ENCODE measurements at regions of chr3 and their contacts with region 1.

Region 1: GRCh38 chr3:172595641-172596393 is 72.6 kb upstream of the TNFSF10 start:
- DNase-seq: peak in 7 of 9 experiments; percentile 18 to 82 (median 34)
- ATAC-seq: peak; percentile 67
- H3K4me3 ChIP-seq: peak overlapping the region; percentile 12 to 35
- H3K4me3 Mint-ChIP-seq: peak overlapping the region; percentile 80
- H3K27ac ChIP-seq: peak overlapping the region in 1 of 2 experiments; percentile 63
- H3K27ac Mint-ChIP-seq: peak overlapping the region; percentile 42
- H3K4me1 ChIP-seq: peaks cover 32% of the 10 kb centered on the region
- H3K4me1 Mint-ChIP-seq: peaks cover 46% of the 10 kb centered on the region
- H3K27me3 ChIP-seq: no peaks in the 10 kb centered on the region
- H3K27me3 Mint-ChIP-seq: no peaks in the 10 kb centered on the region
- CTCF ChIP-seq: peak; percentile 95

Region 2: GRCh38 chr3:172236771-172237742 is 358.8 kb before region 1 on chr3:
- CTCF ChIA-PET with region 1: no interaction called
- POLR2A ChIA-PET with region 1: no interaction called
- intact Hi-C with region 1: no loop called
- DNase-seq: no peak
- ATAC-seq: no peak
- H3K4me3 ChIP-seq: no peak overlapping the region
- H3K4me3 Mint-ChIP-seq: no peak overlapping the region
- H3K27ac ChIP-seq: no peak overlapping the region
- H3K27ac Mint-ChIP-seq: no peak overlapping the region
- H3K4me1 ChIP-seq: no peaks in the 10 kb centered on the region
- H3K4me1 Mint-ChIP-seq: no peaks in the 10 kb centered on the region
- H3K27me3 ChIP-seq: no peaks in the 10 kb centered on the region
- H3K27me3 Mint-ChIP-seq: no peaks in the 10 kb centered on the region
- CTCF ChIP-seq: no peak

Region 3: DNA sequence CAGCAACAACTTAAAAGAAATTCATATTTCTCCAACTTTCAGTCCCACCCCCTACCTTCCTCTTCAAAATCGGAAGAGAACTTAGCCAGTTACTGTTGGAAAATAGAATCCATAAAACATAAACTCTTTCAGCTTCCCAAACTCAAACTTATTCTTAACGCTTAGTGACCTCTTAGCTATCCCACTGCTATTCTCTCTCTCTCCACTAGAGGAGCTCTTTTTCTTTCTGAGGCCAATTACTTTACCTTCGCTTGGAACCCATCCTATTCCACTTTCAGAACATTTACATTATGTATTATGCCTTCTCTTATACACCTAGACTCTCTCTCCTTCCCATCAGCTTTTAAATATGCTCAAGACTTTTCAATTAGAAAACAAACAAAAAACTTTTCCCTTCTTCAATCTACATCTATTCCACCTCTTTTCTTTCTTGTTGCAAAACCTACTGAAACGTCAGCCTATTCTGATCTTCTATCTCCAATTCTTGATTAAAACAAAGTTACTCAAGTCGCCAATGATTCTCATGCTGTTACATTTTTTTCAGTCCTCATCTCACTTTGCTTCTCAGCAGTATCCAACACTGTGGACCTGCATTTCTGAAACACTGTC is 134.2 kb before region 1 on chr3:
- CTCF ChIA-PET with region 1: interaction called, 10 read pairs
- POLR2A ChIA-PET with region 1: no interaction called
- intact Hi-C with region 1: no loop called
- DNase-seq: peak in 2 of 9 experiments; percentile 43 to 55
- ATAC-seq: peak; percentile 62
- H3K4me3 ChIP-seq: no peak overlapping the region
- H3K4me3 Mint-ChIP-seq: no peak overlapping the region
- H3K27ac ChIP-seq: no peak overlapping the region
- H3K27ac Mint-ChIP-seq: no peak overlapping the region
- H3K4me1 ChIP-seq: no peaks in the 10 kb centered on the region
- H3K4me1 Mint-ChIP-seq: no peaks in the 10 kb centered on the region
- H3K27me3 ChIP-seq: peaks cover 0 to 2% of the 10 kb centered on the region in 2 experiments
- H3K27me3 Mint-ChIP-seq: peaks cover 4% of the 10 kb centered on the region
- CTCF ChIP-seq: peak; percentile 93

Region 4: DNA sequence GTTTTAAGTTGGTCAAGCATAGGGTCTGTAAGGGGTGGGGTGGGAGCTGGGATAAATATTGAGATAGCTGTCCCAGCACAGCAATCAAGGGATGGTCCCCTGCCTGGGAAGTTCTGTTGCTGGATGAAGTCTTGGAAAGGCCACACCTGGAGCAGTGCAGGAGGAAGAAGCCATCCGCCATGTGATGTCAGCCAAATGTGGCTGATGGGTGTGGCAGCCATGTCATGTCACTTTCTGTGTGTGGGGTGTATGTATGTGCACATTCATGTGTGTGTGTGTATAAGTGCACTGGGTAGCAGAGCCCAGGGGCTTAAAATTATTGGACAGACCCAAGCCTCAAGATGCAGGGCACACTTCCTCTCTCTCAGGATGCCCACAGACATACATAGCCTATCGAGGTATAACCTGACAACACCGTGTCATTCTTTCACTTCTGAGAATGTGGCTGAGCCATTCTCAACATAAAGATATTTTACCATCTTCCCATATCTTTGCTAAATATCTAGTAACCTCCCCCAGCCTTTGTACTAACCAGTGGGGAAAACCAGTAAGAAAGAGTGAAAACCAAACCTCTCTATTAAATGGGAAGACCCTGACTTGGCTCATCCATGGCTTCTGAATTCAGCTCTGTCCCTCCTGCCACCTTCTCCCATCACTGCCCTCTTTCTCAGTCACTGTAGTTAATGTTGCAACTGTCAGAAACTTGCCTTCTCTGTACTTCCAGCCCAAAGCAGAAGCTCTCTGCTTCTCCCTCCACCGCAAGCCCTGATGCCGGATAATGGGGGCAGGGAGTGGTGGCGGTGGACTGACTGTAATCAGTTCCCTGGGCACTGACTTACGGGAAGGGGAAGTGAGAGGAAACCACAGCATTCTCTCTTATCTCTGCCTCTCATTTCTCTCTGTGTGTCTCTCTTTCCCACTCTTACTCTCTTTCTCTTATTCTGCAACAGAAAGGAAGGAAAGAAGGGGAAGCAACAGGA is 83.7 kb before region 1 on chr3:
- CTCF ChIA-PET with region 1: interaction called, 24 read pairs
- POLR2A ChIA-PET with region 1: no interaction called
- intact Hi-C with region 1: no loop called
- DNase-seq: peak; percentile 18 to 64 (median 39)
- ATAC-seq: peak; percentile 41
- H3K4me3 ChIP-seq: peak overlapping the region in 1 of 2 experiments; percentile 24
- H3K4me3 Mint-ChIP-seq: peak overlapping the region; percentile 55
- H3K27ac ChIP-seq: peak overlapping the region in 1 of 2 experiments; percentile 34
- H3K27ac Mint-ChIP-seq: peak overlapping the region; percentile 73
- H3K4me1 ChIP-seq: peaks cover 37% of the 10 kb centered on the region
- H3K4me1 Mint-ChIP-seq: peaks cover 56% of the 10 kb centered on the region
- H3K27me3 ChIP-seq: no peaks in the 10 kb centered on the region
- H3K27me3 Mint-ChIP-seq: no peaks in the 10 kb centered on the region
- CTCF ChIP-seq: no peak

Region 5: GRCh38 chr3:172530566-172530965 is 65.3 kb before region 1 on chr3:
- CTCF ChIA-PET with region 1: interaction called, 12 read pairs
- POLR2A ChIA-PET with region 1: no interaction called
- intact Hi-C with region 1: no loop called
- DNase-seq: peak in 1 of 9 experiments; percentile 36
- ATAC-seq: peak; percentile 29
- H3K4me3 ChIP-seq: no peak overlapping the region
- H3K4me3 Mint-ChIP-seq: no peak overlapping the region
- H3K27ac ChIP-seq: no peak overlapping the region
- H3K27ac Mint-ChIP-seq: peak overlapping the region; percentile 74
- H3K4me1 ChIP-seq: peaks cover 10% of the 10 kb centered on the region
- H3K4me1 Mint-ChIP-seq: peaks cover 11% of the 10 kb centered on the region
- H3K27me3 ChIP-seq: no peaks in the 10 kb centered on the region
- H3K27me3 Mint-ChIP-seq: no peaks in the 10 kb centered on the region
- CTCF ChIP-seq: no peak

Region 6: GRCh38 chr3:172607305-172608121 is 11.7 kb after region 1 on chr3:
- CTCF ChIA-PET with region 1: interaction called, 38 read pairs
- POLR2A ChIA-PET with region 1: no interaction called
- intact Hi-C with region 1: no loop called
- DNase-seq: no peak
- ATAC-seq: no peak
- H3K4me3 ChIP-seq: no peak overlapping the region
- H3K4me3 Mint-ChIP-seq: no peak overlapping the region
- H3K27ac ChIP-seq: no peak overlapping the region
- H3K27ac Mint-ChIP-seq: no peak overlapping the region
- H3K4me1 ChIP-seq: no peaks in the 10 kb centered on the region
- H3K4me1 Mint-ChIP-seq: no peaks in the 10 kb centered on the region
- H3K27me3 ChIP-seq: no peaks in the 10 kb centered on the region
- H3K27me3 Mint-ChIP-seq: peaks cover 2% of the 10 kb centered on the region
- CTCF ChIP-seq: no peak

Region 7: DNA sequence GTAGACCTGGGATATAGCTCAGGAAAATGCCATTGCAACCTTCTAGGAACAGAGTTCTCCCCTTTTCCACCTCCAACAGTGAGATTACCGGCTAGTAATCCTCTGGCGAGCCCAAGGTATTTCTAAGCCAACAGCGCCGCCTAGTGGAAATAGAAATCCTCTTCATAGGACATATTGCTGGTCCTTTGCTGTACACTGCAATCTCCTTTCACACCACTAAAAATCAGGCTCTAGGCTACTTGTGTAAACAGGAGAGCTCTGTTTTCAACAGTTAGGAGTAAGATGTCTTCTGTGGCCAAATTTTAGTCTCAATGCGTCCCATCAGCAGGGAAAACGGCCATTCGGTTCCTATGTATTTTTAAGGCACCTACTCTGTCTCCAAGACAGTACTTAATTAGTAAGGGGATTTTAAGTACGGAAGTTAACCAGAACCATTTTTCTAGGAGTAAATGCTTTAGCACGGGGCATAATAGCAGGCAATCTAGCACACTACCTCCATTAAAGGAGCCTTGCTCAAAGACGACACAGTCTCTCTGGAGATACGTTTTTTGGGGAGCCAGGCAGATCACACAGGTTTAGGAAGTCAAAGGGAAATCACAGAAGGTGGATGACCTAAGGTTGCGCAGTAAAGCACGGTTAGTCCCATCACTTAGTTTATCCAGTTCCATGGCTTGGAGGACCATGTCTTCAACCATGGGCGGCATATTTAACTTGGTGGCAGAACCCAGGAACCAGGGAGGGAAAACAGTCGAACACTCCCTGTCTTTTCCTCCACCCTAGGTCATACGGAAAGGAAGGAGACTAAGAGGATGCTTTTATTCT is 71.3 kb after region 1 on chr3:
- CTCF ChIA-PET with region 1: interaction called, 11 read pairs
- POLR2A ChIA-PET with region 1: no interaction called
- intact Hi-C with region 1: loop called in 1 of 2 experiments (anchors 2 kb)
- DNase-seq: peak; percentile 51 to 80 (median 73)
- ATAC-seq: peak; percentile 91
- H3K4me3 ChIP-seq: no peak overlapping the region
- H3K4me3 Mint-ChIP-seq: no peak overlapping the region
- H3K27ac ChIP-seq: no peak overlapping the region
- H3K27ac Mint-ChIP-seq: no peak overlapping the region
- H3K4me1 ChIP-seq: peaks cover 13% of the 10 kb centered on the region
- H3K4me1 Mint-ChIP-seq: peaks cover 15% of the 10 kb centered on the region
- H3K27me3 ChIP-seq: no peaks in the 10 kb centered on the region
- H3K27me3 Mint-ChIP-seq: no peaks in the 10 kb centered on the region
- CTCF ChIP-seq: peak; percentile 77

Region 8: GRCh38 chr3:172698631-172699030 is 102.8 kb after region 1 on chr3:
- CTCF ChIA-PET with region 1: no interaction called
- POLR2A ChIA-PET with region 1: no interaction called
- intact Hi-C with region 1: no loop called
- DNase-seq: peak in 1 of 9 experiments; percentile 10
- ATAC-seq: no peak
- H3K4me3 ChIP-seq: no peak overlapping the region
- H3K4me3 Mint-ChIP-seq: no peak overlapping the region
- H3K27ac ChIP-seq: no peak overlapping the region
- H3K27ac Mint-ChIP-seq: no peak overlapping the region
- H3K4me1 ChIP-seq: no peaks in the 10 kb centered on the region
- H3K4me1 Mint-ChIP-seq: peaks cover 6% of the 10 kb centered on the region
- H3K27me3 ChIP-seq: no peaks in the 10 kb centered on the region
- H3K27me3 Mint-ChIP-seq: no peaks in the 10 kb centered on the region
- CTCF ChIP-seq: no peak

Measured in CD8-positive, alpha-beta T cell (primary cell).